HepG2 (cell line): ENCODE measurements at regions of chr2 and their contacts with region 1.

Region 1: DNA sequence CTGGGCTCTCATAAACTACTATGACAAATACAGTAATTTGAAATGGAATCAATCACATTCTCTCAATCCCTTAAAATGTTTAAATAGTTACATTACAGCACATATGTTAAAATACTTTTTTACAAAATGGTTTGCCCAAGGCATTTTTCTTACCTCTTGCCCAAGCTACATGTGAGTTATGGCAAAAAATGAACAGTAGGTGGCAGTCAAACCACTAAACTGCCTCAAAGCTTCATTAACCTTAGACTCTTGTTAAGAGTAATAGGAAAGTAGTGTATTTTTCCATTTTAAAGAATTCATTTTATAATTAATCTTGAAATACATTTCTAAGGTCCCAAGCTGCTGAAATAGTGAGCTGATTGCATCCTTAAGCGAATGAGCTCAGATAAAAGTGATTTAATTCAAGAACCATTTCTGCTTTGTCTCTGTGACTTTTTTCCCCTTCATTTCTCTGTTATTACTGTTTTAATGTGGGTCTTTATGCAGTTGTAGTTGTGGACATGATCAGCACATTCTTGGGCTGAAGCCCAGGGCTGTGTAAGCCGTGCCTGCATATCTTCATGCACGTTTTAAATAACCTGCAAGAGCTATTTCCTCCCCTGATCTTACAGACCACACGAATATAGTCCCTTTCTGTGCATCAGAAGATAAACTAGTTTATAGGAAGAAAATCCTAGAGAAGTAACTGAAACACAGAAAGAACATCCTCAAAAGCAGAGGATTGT is 311.8 kb downstream of the LNPK start:
- DNase-seq: peak; percentile 72
- ATAC-seq: peak; percentile 79
- H3K4me3 ChIP-seq: no peak overlapping the region
- H3K27ac ChIP-seq: no peak overlapping the region
- H3K4me1 ChIP-seq: no peaks in the 10 kb centered on the region
- H3K27me3 ChIP-seq: no peaks in the 10 kb centered on the region
- CTCF ChIP-seq: peak; percentile 81
- EP300 ChIP-seq: no peak
- POLR2A ChIP-seq: no peak
- RAD21 ChIP-seq: peak; percentile 69

Region 2: DNA sequence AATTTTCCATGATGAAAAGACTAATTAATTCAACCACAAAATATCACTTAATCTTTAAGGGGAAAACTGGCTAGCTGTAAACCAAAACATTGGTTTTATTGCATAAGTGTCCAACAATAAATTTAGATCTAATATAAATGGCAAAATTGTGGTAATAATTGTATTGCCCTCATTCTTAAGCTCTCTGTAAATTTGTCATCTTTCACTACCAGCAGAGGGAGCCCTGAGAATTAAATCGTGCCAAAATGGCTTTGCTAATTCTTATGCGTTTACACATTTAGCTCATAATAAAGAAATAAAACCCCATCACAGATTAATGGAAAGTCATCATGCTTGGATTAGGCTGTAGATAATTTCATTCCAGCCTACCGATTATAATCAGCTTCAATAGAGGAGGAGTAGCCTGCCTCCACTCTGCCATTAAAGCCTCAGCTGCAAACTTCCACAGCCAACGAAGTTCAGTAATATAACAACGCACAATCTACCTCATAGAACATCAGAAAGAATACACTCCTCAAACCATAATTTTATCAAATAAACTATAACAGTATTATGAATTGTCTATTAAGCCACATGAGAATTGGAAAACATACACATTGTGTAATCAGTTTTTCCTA is 438.7 kb before region 1 on chr2:
- CTCF ChIA-PET with region 1: no interaction called
- POLR2A ChIA-PET with region 1: no interaction called
- in situ Hi-C with region 1: no loop called
- intact Hi-C with region 1: loop called (anchors 1 kb)
- DNase-seq: peak; percentile 36
- ATAC-seq: no peak; the same call in 2 of the 3 replicates
- H3K4me3 ChIP-seq: no peak overlapping the region
- H3K27ac ChIP-seq: no peak overlapping the region
- H3K4me1 ChIP-seq: no peaks in the 10 kb centered on the region
- H3K27me3 ChIP-seq: no peaks in the 10 kb centered on the region
- CTCF ChIP-seq: peak; percentile 60
- EP300 ChIP-seq: no peak
- POLR2A ChIP-seq: no peak
- RAD21 ChIP-seq: no peak

Region 3: DNA sequence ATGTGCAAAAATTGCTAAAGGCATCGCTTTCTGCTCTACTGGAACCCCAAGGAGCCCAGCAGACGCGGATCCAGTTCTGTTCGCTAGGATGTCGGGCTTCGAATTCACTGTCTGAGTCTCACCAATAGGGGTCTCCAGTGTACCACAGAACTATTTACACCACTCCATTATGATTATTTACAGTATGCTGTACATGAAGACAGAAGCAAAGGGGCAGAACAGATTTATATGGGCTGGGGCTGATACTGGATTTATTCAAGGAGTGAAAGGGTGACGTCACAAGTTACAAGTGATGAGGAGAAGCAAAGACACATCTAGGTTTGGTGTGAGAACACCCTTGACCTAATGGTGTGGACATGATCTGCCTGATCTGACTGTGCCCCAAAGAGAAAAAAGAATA is 323.5 kb before region 1 on chr2:
- CTCF ChIA-PET with region 1: no interaction called
- POLR2A ChIA-PET with region 1: no interaction called
- in situ Hi-C with region 1: loop called (anchors 10 kb)
- intact Hi-C with region 1: loop called (anchors 1 kb)
- DNase-seq: peak; percentile 53
- ATAC-seq: peak; percentile 97
- H3K4me3 ChIP-seq: no peak overlapping the region
- H3K27ac ChIP-seq: no peak overlapping the region
- H3K4me1 ChIP-seq: no peaks in the 10 kb centered on the region
- H3K27me3 ChIP-seq: peaks cover 0 to 37% of the 10 kb centered on the region in 2 experiments; a peak in 3 of 5 replicates
- CTCF ChIP-seq: peak; percentile 91
- EP300 ChIP-seq: no peak
- POLR2A ChIP-seq: no peak
- RAD21 ChIP-seq: peak; percentile 84

Region 4: GRCh38 chr2:176001916-176002687 is 311.8 kb after region 1 on chr2 and contains the start of gene LNPK:
- CTCF ChIA-PET with region 1: no interaction called
- POLR2A ChIA-PET with region 1: no interaction called
- in situ Hi-C with region 1: no loop called
- intact Hi-C with region 1: loop called (anchors 2 kb)
- DNase-seq: peak; percentile 87
- ATAC-seq: peak; percentile 96
- H3K4me3 ChIP-seq: peak within 1 kb of the TSS; percentile 61 to 84 (median 82)
- H3K27ac ChIP-seq: peak within 1 kb of the TSS; percentile 80
- H3K4me1 ChIP-seq: peaks cover 44% of the 10 kb centered on the region
- H3K27me3 ChIP-seq: peaks cover 0 to 9% of the 10 kb centered on the region in 2 experiments; a peak in 1 of 5 replicates
- CTCF ChIP-seq: peak; percentile 39
- EP300 ChIP-seq: peak in 1 of 2 experiments; percentile 42; a peak in 1 of 4 replicates
- POLR2A ChIP-seq: peak; percentile 88 to 94
- RAD21 ChIP-seq: peak; percentile 53; the same call in 1 of the 2 replicates
- total RNA-seq, gene LNPK: 25.4 and 30.1 TPM in 2 replicates

Region 5: GRCh38 chr2:176088048-176088936 is 398.0 kb after region 1 on chr2:
- CTCF ChIA-PET with region 1: interaction called, 26 read pairs
- POLR2A ChIA-PET with region 1: no interaction called
- in situ Hi-C with region 1: no loop called
- intact Hi-C with region 1: loop called (anchors 1 kb)
- DNase-seq: peak; percentile 40
- ATAC-seq: peak; percentile 92
- H3K4me3 ChIP-seq: peak overlapping the region; percentile 36 to 75 (median 51); a peak in 5 of 6 replicates
- H3K27ac ChIP-seq: no peak overlapping the region
- H3K4me1 ChIP-seq: peaks cover 25% of the 10 kb centered on the region
- H3K27me3 ChIP-seq: peaks cover 19 to 94% of the 10 kb centered on the region in 2 experiments
- CTCF ChIP-seq: peak; percentile 96
- EP300 ChIP-seq: no peak
- POLR2A ChIP-seq: no peak
- RAD21 ChIP-seq: peak; percentile 87

Region 6: DNA sequence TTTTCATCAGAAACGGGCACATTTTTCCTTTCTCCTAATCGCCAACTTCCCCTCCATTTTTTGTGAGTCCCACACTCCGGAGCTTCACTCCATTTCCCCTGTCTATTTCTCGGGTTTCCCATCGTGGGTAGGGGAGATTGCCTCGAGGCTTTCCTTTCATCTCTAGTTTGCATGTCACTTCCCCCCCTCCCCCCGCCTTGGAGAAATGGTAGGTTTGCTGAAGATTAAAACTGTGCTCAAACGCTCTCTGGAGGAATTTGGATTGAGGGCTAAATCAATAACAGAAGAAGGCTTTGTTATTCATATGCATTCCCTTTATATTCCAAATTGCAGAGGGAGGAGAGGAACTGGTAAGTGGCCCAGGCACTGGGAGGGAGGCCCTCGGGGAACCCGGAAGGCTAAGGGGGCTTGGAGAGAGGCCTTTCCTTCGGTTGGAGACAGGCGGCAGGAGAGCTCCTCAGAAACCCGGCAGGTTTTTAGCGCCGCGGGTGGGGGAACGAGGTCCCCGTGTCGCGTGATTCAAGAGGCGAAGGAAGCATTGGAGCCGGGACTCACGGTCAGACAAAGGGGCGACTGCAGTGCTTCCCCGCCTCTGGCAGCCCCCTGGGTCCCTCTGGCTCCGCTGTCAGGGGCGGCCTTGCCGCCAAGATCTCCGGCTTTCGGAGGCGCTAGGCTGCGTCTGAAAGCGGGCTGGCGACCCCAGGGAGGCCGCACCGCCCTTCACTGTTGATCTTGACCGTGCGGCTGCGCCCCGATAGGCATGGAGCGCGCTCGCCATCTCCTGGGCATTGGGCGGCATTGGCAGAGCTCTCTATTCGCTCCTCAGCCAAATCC is 406.9 kb after region 1 on chr2:
- CTCF ChIA-PET with region 1: interaction called, 33 read pairs
- POLR2A ChIA-PET with region 1: no interaction called
- in situ Hi-C with region 1: loop called (anchors 5 kb)
- intact Hi-C with region 1: loop called (anchors 1 kb)
- DNase-seq: peak; percentile 64
- ATAC-seq: peak; percentile 95
- H3K4me3 ChIP-seq: peak overlapping the region; percentile 47 to 75 (median 61)
- H3K27ac ChIP-seq: no peak overlapping the region
- H3K4me1 ChIP-seq: peaks cover 17% of the 10 kb centered on the region
- H3K27me3 ChIP-seq: peaks cover 28 to 95% of the 10 kb centered on the region in 2 experiments
- CTCF ChIP-seq: peak; percentile 98
- EP300 ChIP-seq: no peak
- POLR2A ChIP-seq: no peak
- RAD21 ChIP-seq: peak; percentile 99

Region 7: DNA sequence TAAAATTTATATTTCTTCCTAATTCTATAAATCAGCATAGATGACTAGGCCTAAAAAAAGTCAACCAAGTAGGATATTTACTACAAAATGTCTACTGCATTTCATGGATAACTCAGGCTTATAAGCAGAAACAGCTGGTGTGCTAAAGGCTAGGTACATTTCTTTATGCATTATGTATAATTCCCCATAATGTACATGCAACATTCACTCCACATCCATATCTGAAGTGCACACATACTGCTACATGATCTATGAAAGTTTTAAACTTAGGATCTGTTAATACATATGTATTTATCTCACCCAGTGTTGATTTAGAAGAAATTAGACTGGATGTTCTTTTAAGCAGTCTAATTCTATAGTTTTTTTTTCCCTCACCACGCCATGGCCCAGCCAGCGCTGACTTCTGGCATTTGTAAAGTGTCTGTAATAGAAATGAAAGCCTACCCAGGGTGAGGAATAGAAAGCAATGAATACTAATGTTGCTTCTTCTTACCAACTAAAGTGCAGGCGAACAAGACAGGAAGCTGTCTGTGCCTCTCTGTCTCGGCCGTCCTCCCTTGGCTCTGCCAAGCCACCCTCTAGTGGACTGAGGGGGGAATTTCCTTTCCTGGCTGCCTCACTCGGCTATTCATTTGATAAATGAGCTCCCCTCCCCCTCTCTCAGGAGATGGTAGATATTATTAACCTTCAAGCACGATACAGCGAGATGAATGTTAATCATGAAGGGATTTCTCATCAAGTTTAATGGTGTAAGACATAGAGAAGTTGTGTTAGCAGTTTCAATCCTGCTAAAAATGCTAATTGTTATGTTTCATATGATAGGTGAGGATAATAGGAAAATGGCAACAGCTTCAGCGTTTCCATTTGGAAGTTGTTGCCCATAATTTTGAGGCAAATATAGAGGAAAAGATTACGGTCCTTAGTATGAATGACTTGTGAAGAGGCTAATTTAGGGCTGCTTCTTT is 963.5 kb after region 1 on chr2:
- CTCF ChIA-PET with region 1: no interaction called
- POLR2A ChIA-PET with region 1: no interaction called
- in situ Hi-C with region 1: loop called (anchors 25 kb)
- intact Hi-C with region 1: no loop called
- DNase-seq: peak; percentile 57
- ATAC-seq: peak; percentile 94
- H3K4me3 ChIP-seq: no peak overlapping the region
- H3K27ac ChIP-seq: no peak overlapping the region
- H3K4me1 ChIP-seq: no peaks in the 10 kb centered on the region
- H3K27me3 ChIP-seq: peaks cover 0 to 15% of the 10 kb centered on the region in 2 experiments; a peak in 2 of 5 replicates
- CTCF ChIP-seq: peak; percentile 52
- EP300 ChIP-seq: no peak
- POLR2A ChIP-seq: no peak
- RAD21 ChIP-seq: 0 out of 2 replicates have a peak, but pooled peaks have one; percentile 22